Activated CD8-positive, alpha-beta memory T cell treated with anti-CD3 and anti-CD28 coated beads, Interleukin-2, amount 10 ng/mL, durations not matched to agents 7 days and 5 days (primary cell): ENCODE measurements at regions of chr14 and their contacts with region 1.

Region 1: DNA sequence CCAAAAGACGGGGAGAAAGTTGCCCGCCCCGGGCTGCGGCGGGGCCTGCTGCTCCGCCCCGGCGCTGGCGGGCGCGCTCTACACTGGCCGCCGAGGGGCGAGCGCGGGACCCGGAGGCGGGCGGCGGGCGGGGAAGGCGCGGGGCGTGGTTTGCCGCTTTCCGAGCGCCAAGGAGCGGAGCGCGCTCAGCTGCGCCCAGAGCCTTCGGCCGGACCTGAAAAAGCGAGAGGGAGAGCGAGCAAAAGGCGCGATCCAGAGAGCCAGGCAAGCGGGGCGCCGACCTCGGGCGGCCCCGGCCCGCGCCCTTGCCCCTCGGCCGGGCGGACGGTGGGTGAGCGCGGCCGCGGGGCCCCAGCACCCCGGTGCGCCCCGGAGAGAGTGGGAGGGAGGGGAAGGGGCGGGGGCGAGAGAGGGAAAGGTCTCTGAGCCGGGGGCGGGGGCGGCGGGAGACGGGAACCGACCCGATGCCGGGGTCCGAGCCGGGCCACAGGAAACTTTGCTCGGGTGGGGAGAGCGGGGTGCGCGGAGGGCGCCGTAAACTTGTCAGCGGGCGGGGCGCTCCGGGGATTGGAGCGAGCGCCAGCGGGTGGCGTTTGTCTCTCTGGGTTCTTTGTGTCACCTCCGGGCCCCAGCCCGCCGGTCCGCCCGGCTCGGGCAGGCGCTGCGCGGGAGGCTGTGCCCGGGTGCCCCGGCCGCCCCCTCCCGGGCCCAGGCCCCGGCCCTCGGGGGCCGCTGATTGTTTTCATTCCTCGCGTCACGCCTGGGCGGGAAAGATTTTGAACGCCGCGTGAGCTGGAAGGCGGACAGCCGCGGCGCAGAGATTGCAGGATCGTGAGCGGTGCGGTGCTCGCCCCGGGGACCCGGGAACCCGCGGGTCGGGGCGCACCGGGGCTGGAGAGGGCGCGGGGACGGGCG is at the start of gene SYNE2:
- DNase-seq: peak; percentile 85
- ATAC-seq: peak; percentile 87
- H3K4me3 Mint-ChIP-seq: peak within 1 kb of the TSS; percentile 96
- H3K27ac Mint-ChIP-seq: peak within 1 kb of the TSS; percentile 89
- H3K4me1 Mint-ChIP-seq: peaks cover 45% of the 10 kb centered on the region
- H3K27me3 Mint-ChIP-seq: peaks cover 7% of the 10 kb centered on the region
- total RNA-seq, gene SYNE2: 69.3 to 143 TPM

Region 2: DNA sequence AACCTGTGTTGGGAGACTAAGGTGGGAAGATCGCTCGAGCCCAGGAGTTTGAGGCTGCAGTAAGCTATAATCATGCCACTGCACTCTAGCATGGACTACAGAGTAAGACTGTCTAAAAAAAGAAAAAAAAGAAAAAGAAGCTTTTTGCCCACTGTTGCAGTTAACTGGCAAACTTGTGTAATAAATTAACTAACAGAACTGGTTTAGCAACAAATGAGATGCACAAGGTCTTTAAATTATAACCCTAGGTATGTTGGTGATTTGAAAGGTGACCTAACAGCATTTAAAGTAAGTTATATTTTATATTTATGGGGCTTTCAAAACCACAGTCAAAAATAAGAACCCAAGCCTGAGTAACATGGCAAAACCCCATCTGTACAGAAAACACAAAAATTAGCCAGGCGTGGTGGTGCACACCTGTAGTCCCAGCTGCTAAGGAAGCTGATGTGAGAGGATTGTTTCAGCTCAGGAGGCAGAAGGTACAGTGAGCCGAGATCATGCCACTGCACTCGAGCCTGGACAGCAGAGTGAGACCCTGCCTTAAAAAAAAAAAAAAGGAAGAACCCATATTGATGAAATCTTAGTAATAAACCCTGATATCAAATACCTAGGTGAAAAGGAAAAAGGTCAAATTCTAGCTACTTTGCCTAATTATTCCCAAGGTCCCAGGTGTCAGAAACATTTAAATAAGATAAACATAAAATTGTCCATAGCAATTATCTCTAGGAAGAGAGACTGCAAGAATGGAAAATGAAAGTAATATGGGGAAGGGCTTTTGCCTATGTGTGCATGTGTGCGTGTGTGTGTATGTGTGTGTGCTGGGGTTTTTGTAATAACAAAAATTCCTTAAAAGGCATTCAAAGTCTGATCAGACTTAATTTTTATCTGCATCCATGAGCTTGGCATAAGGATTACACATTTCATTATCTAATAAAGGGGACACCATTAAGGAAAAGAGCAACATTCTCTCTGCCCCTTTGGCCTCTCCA is 15.2 kb after region 1 on chr14:
- CTCF ChIA-PET with region 1: interaction called, 30 read pairs
- DNase-seq: no peak
- ATAC-seq: no peak
- H3K4me3 Mint-ChIP-seq: peak overlapping the region; percentile 28
- H3K27ac Mint-ChIP-seq: peak overlapping the region; percentile 48
- H3K4me1 Mint-ChIP-seq: peaks cover 58% of the 10 kb centered on the region
- H3K27me3 Mint-ChIP-seq: no peaks in the 10 kb centered on the region